Activated naive CD4-positive, alpha-beta T cell treated with anti-CD3 and anti-CD28 coated beads, Interleukin-2, amount 10 ng/mL, durations not matched to agents 7 days and 5 days (primary cell): ENCODE measurements at regions of chr1 and their contacts with region 1.

Region 1: DNA sequence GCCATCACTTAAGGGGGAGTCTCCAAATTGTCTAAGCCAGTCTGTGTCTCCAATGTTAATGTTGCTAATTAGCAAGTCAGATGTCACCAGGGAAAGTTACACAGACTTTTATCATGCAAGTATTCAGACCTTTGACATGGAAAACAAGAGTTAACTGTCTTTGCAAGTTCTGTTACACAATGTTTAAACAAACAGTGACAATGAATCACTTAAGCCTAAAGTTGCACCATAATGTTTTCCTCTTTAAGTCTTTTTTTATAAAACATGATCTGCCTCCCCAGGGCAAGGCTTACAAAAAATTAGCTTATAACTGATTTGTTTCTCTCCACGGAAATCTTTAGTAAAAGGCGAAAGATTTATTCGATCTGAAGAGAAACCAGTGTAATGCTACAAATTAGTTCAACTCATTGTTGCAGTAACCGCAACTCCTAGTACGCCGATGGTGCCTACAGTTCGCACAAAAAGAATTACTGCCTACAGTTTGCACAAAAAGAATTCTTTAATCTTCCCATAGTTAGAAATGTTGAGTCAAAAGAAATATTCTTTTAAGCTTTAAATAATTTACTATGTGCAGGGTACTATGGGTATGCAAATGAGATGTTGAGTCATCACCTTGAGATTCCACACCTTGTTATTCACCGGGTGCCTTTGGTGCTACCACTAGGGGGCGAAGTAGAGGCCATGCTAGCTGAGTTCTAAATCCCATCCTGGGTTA is 45.3 kb downstream of the HHAT start:
- DNase-seq: peak; percentile 73
- H3K4me3 Mint-ChIP-seq: no peak overlapping the region
- H3K27ac Mint-ChIP-seq: peak overlapping the region; percentile 50
- H3K4me1 Mint-ChIP-seq: peaks cover 9% of the 10 kb centered on the region
- H3K27me3 Mint-ChIP-seq: no peaks in the 10 kb centered on the region

Region 2: GRCh38 chr1:210360852-210361477 is 13.1 kb before region 1 on chr1:
- CTCF ChIA-PET with region 1: interaction called, 27 read pairs
- DNase-seq: no peak
- H3K4me3 Mint-ChIP-seq: no peak overlapping the region
- H3K27ac Mint-ChIP-seq: no peak overlapping the region
- H3K4me1 Mint-ChIP-seq: no peaks in the 10 kb centered on the region
- H3K27me3 Mint-ChIP-seq: no peaks in the 10 kb centered on the region

Region 3: DNA sequence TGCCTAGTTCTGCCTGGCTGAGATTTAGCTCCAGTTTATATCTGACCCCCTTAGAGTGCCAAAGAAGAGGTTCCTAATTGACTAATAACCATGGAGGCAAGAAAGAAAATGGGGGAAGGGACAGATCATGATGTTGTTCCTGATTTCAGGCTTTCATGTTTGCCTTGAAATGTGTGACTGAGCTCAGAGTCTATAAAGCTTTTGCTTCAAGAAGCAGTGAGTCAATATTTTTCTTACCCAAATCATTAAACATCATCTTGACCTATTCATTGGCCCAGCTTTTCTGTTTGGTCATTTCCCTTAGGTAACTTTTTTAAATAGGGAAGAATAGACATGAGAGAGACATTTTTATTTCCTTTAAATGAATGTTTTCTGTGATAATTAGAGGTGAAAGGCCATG is 10.6 kb after region 1 on chr1:
- CTCF ChIA-PET with region 1: interaction called, 16 read pairs
- DNase-seq: no peak
- H3K4me3 Mint-ChIP-seq: no peak overlapping the region
- H3K27ac Mint-ChIP-seq: no peak overlapping the region
- H3K4me1 Mint-ChIP-seq: no peaks in the 10 kb centered on the region
- H3K27me3 Mint-ChIP-seq: no peaks in the 10 kb centered on the region

Region 4: DNA sequence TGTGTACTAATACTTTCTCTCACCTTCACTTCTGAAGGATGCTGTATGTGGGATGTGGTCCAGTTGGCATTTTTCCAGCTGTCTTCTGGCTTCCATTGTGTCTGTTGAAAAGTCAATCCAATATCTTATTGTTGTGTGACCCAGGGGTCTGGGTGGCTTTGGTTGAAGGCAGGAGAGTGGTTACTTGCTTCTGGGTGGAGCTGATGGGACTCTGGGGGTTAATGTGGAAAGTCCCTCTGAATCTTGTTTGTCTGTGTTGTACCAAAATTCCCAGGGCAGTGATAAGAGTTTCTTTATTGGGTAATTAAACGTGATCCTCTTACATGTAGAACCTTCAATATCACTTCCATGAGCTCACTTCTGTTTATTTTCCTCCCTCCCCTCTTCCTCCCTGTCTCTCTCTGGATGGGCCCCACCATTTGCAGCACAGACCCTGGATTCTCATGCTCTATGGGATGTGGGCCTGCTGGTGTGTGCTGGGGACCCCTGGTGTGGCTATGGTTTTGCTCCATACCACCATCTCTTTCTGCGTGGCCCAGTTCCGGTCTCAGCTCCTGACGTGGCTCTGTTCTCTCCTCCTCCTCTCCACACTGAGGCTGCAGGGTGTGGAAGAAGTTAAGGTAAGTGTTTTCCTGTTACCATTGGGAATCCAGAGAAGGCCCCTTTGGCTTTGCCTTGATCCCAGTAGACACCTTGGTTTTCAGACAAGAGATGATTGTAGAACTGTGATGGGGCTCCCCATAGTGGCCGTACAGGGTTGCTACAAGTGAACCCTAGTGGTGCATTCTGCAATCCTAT is 26.2 kb after region 1 on chr1:
- CTCF ChIA-PET with region 1: interaction called, 52 read pairs
- DNase-seq: peak; percentile 61
- H3K4me3 Mint-ChIP-seq: no peak overlapping the region
- H3K27ac Mint-ChIP-seq: no peak overlapping the region
- H3K4me1 Mint-ChIP-seq: peaks cover 22% of the 10 kb centered on the region
- H3K27me3 Mint-ChIP-seq: no peaks in the 10 kb centered on the region